HCT116 (cell line): ENCODE measurements at regions of chr3 and their contacts with region 1.

Region 1: GRCh38 chr3:5426094-5426883 is 238.8 kb downstream of the EDEM1 start:
- DNase-seq: peak; percentile 71
- ATAC-seq: peak; percentile 100
- H3K4me3 ChIP-seq: no peak overlapping the region
- H3K27ac ChIP-seq: no peak overlapping the region
- H3K4me1 ChIP-seq: peaks cover 0 to 4% of the 10 kb centered on the region in 2 experiments; a peak in 1 of 4 replicates
- H3K27me3 ChIP-seq: no peaks in the 10 kb centered on the region
- CTCF ChIP-seq: peak; percentile 59 to 96 (median 93); a peak in 5 of 6 replicates
- POLR2A ChIP-seq: no peak
- RAD21 ChIP-seq: peak; percentile 88

Region 2: GRCh38 chr3:4885316-4885715 is 541.0 kb before region 1 on chr3:
- CTCF ChIA-PET with region 1: no interaction called
- POLR2A ChIA-PET with region 1: no interaction called
- RAD21 ChIA-PET with region 1: no interaction called
- intact Hi-C with region 1: no loop called
- DNase-seq: no peak
- ATAC-seq: no peak
- H3K4me3 ChIP-seq: no peak overlapping the region
- H3K27ac ChIP-seq: no peak overlapping the region
- H3K4me1 ChIP-seq: no peaks in the 10 kb centered on the region
- H3K27me3 ChIP-seq: no peaks in the 10 kb centered on the region
- CTCF ChIP-seq: no peak; a peak in 1 of 6 replicates
- POLR2A ChIP-seq: no peak
- RAD21 ChIP-seq: no peak

Region 3: GRCh38 chr3:5731094-5731493 is 304.8 kb after region 1 on chr3:
- CTCF ChIA-PET with region 1: no interaction called
- POLR2A ChIA-PET with region 1: no interaction called
- RAD21 ChIA-PET with region 1: no interaction called
- intact Hi-C with region 1: loop called (anchors 2 kb)
- DNase-seq: peak; percentile 12
- ATAC-seq: peak; percentile 73
- H3K4me3 ChIP-seq: no peak overlapping the region
- H3K27ac ChIP-seq: no peak overlapping the region
- H3K4me1 ChIP-seq: no peaks in the 10 kb centered on the region
- H3K27me3 ChIP-seq: no peaks in the 10 kb centered on the region
- CTCF ChIP-seq: peak; percentile 56 to 70 (median 61); a peak in 5 of 6 replicates
- POLR2A ChIP-seq: no peak
- RAD21 ChIP-seq: peak; percentile 81